Activated B cell treated with CpG ODN at 0.5 μM for 24 hours (primary cell): ENCODE measurements at regions of chr22 and their contacts with region 1.

Region 1: GRCh38 chr22:39520054-39520891 is at the start of gene ATF4:
- DNase-seq: peak; percentile 88
- ATAC-seq: peak; percentile 91
- H3K4me3 Mint-ChIP-seq: peak within 1 kb of the TSS; percentile 91
- H3K27ac Mint-ChIP-seq: peak within 1 kb of the TSS; percentile 98
- H3K4me1 Mint-ChIP-seq: peaks cover 58% of the 10 kb centered on the region
- H3K27me3 Mint-ChIP-seq: peaks cover 2% of the 10 kb centered on the region
- CTCF ChIP-seq: no peak
- total RNA-seq, gene ATF4: 363 and 368 TPM in 2 replicates

Region 2: DNA sequence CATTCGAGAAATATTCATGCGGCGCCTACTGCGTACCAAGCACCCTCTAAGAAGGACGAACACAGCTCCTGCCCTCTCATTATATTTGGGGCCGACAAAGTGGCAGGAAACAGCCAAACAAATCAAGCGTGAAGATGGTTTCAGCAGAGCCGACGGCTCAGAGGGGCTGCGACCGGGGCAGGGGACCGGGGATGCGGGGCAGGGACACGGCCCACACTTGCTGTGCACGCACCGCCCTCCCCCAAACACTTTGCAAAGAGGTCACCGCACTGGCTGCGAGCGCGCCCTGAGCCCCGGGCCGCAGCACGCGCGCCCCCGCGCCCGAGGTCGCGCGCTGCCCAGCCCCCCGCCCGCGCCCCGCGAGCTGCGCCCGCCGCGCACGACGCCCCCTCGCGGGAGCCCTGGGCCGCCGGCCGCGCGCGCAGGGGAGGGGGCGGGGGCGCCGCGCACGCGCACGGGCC is 170.7 kb before region 1 on chr22:
- CTCF ChIA-PET with region 1: no interaction called
- POLR2A ChIA-PET with region 1: interaction called, 14 read pairs
- intact Hi-C with region 1: loop called (anchors 1 kb)
- DNase-seq: peak; percentile 47
- ATAC-seq: peak; percentile 9
- H3K4me3 Mint-ChIP-seq: peak overlapping the region; percentile 87
- H3K27ac Mint-ChIP-seq: peak overlapping the region; percentile 87
- H3K4me1 Mint-ChIP-seq: peaks cover 40% of the 10 kb centered on the region
- H3K27me3 Mint-ChIP-seq: peaks cover 2% of the 10 kb centered on the region
- CTCF ChIP-seq: no peak

Region 3: GRCh38 chr22:39405346-39406085 is 114.8 kb before region 1 on chr22:
- CTCF ChIA-PET with region 1: interaction called, 3 read pairs
- POLR2A ChIA-PET with region 1: interaction called, 11 read pairs
- intact Hi-C with region 1: no loop called
- DNase-seq: no peak
- ATAC-seq: no peak
- H3K4me3 Mint-ChIP-seq: no peak overlapping the region
- H3K27ac Mint-ChIP-seq: no peak overlapping the region
- H3K4me1 Mint-ChIP-seq: peaks cover 20% of the 10 kb centered on the region
- H3K27me3 Mint-ChIP-seq: no peaks in the 10 kb centered on the region
- CTCF ChIP-seq: no peak

Region 4: GRCh38 chr22:39439170-39439569 is 81.1 kb before region 1 on chr22:
- CTCF ChIA-PET with region 1: interaction called, 15 read pairs
- POLR2A ChIA-PET with region 1: interaction called, 11 read pairs
- intact Hi-C with region 1: no loop called
- DNase-seq: no peak
- ATAC-seq: no peak
- H3K4me3 Mint-ChIP-seq: peak overlapping the region; percentile 22
- H3K27ac Mint-ChIP-seq: no peak overlapping the region
- H3K4me1 Mint-ChIP-seq: peaks cover 56% of the 10 kb centered on the region
- H3K27me3 Mint-ChIP-seq: no peaks in the 10 kb centered on the region
- CTCF ChIP-seq: no peak

Region 5: GRCh38 chr22:39490135-39490798 is 30.0 kb before region 1 on chr22:
- CTCF ChIA-PET with region 1: interaction called, 4 read pairs
- POLR2A ChIA-PET with region 1: interaction called, 11 read pairs
- intact Hi-C with region 1: loop called (anchors 1 kb)
- DNase-seq: peak; percentile 55
- ATAC-seq: peak; percentile 99
- H3K4me3 Mint-ChIP-seq: peak overlapping the region; percentile 17
- H3K27ac Mint-ChIP-seq: peak overlapping the region; percentile 13
- H3K4me1 Mint-ChIP-seq: peaks cover 23% of the 10 kb centered on the region
- H3K27me3 Mint-ChIP-seq: no peaks in the 10 kb centered on the region
- CTCF ChIP-seq: no peak

Region 6: DNA sequence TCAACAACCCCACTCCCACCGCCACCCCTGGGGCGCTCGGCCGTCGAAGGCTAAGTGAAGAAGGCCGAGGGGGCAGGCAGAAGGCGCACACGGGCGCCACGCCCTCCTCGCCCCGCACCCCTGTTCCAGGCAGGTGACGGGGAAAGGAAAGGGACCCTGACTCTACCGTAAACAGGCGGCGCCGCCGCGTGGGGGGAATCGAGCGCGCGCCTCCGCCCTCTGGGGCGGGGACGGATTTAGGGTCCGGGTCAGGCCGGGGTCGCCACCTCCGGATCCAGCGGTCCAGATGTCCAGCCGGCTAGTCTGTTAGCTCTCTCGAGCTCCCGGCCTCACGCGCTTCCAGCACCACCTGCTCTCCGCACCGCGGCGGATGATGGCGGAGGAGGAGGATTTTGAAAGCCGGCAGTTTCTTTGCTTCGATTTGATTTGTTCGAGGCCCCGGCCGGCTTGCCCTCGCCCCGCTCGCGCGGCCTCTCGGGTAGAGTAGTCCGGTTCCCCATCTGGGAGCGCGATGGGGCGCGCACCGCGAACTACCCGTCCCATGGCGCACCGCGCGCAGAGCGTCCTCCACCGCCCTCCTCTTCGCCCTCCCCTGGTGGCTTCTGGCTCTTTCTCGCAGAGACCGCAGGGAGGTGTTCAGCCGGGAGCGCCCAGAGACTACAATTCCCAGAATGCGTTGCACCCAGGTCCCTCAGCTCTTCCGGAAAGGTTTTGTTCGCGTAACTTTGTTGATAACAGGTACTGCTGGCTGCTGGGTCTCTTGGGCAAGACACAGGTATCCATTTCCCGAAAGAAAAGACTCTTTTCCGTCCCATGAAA is 1765.8 kb after region 1 on chr22 and contains the start of gene RANGAP1:
- CTCF ChIA-PET with region 1: no interaction called
- POLR2A ChIA-PET with region 1: no interaction called
- intact Hi-C with region 1: loop called (anchors 2 kb)
- DNase-seq: peak; percentile 93
- ATAC-seq: peak; percentile 97
- H3K4me3 Mint-ChIP-seq: peak within 1 kb of the TSS; percentile 94
- H3K27ac Mint-ChIP-seq: peak within 1 kb of the TSS; percentile 98
- H3K4me1 Mint-ChIP-seq: peaks cover 28% of the 10 kb centered on the region
- H3K27me3 Mint-ChIP-seq: no peaks in the 10 kb centered on the region
- CTCF ChIP-seq: no peak
- total RNA-seq, gene RANGAP1: 48.9 and 56.4 TPM in 2 replicates